PC-9 (cell line): ENCODE measurements at regions of chr1 and their contacts with region 1.

Region 1: GRCh38 chr1:32221980-32222755 is at the starts of genes EIF3I and TMEM234:
- DNase-seq: peak; percentile 87 to 88
- H3K4me3 ChIP-seq: peak within 1 kb of the TSS; percentile 85
- H3K27ac ChIP-seq: peak within 1 kb of the TSS; percentile 59
- H3K4me1 ChIP-seq: peaks cover 25% of the 10 kb centered on the region
- H3K27me3 ChIP-seq: no peaks in the 10 kb centered on the region
- CTCF ChIP-seq: no peak
- total RNA-seq, gene EIF3I: 199 and 229 TPM in 2 replicates
- total RNA-seq, gene TMEM234: 14.1 and 18.1 TPM in 2 replicates

Region 2: GRCh38 chr1:31897526-31898100 is 324.6 kb before region 1 on chr1:
- CTCF ChIA-PET with region 1: no interaction called
- POLR2A ChIA-PET with region 1: no interaction called
- intact Hi-C with region 1: no loop called
- DNase-seq: no peak
- H3K4me3 ChIP-seq: no peak overlapping the region
- H3K27ac ChIP-seq: no peak overlapping the region
- H3K4me1 ChIP-seq: no peaks in the 10 kb centered on the region
- H3K27me3 ChIP-seq: no peaks in the 10 kb centered on the region
- CTCF ChIP-seq: no peak

Region 3: GRCh38 chr1:32273388-32274208 is 51.4 kb after region 1 on chr1:
- CTCF ChIA-PET with region 1: no interaction called
- POLR2A ChIA-PET with region 1: no interaction called
- intact Hi-C with region 1: no loop called
- DNase-seq: peak; percentile 79 to 86
- H3K4me3 ChIP-seq: peak overlapping the region; percentile 38; the same call in 1 of the 2 replicates
- H3K27ac ChIP-seq: peak overlapping the region; percentile 4; the same call in 1 of the 2 replicates
- H3K4me1 ChIP-seq: peaks cover 18% of the 10 kb centered on the region
- H3K27me3 ChIP-seq: no peaks in the 10 kb centered on the region
- CTCF ChIP-seq: peak; percentile 53

Region 4: DNA sequence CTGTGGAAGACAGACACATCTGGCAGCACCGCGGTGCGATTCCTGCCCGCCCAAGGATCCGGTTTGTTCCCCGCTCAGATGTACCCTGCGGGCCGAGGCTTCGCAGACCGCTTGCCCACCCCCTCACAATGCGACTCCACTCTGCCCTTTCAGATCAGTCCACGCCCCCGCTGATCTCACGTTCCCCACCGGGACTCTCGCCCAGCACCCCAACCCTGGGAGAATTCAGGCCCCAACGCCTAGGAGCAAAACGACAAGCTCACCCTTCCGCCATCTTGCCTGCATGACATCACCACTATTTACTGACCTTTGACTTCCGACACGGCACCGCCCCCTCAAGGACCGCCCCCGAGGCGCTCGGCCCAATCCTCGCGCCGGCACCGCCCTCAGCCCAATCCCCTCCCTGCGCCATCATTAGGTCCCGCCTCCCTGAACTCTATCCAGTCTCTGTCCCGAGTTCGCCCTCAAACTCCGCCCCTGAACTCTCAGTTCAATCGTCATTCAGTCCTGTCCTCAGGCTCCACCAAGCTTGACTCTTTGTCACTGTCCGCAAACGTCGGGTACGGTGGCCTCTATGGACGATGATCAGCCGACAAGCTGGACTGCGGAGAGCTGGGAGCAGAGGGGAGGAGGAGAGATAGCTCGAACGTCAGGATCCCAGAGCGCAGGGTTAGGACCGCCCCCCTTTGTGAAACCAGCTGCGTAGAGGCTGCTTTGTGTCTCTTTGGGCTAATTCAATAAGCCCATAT is 172.1 kb after region 1 on chr1 and contains the start of gene BSDC1:
- CTCF ChIA-PET with region 1: no interaction called
- POLR2A ChIA-PET with region 1: no interaction called
- intact Hi-C with region 1: loop called (anchors 10 kb)
- DNase-seq: peak; percentile 97 to 98
- H3K4me3 ChIP-seq: peak within 1 kb of the TSS; percentile 71
- H3K27ac ChIP-seq: peak within 1 kb of the TSS; percentile 59
- H3K4me1 ChIP-seq: peaks cover 22% of the 10 kb centered on the region
- H3K27me3 ChIP-seq: no peaks in the 10 kb centered on the region
- CTCF ChIP-seq: no peak
- total RNA-seq, gene BSDC1: 74.0 and 76.2 TPM in 2 replicates